ENCODE measurements at regions of chr3 and their contacts with region 1.

Region 1: DNA sequence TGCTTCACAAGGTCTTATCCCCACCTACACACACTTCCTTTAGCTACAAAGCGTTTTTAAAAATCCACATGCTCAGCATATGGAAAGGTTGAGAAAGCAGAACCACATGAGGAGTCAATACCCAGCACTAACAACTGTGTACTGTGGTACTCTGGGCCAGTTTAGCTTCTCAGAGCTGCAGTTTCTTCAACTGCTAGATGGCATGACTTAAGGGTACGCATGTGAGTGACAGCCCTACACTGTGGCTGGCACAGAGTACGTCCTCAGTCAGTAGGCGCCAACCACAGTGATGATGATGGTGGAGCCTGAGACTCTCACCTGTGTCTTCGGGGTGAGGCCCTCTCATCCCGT is 17.4 kb downstream of the CCDC12 start:
- DNase-seq: peak in 15 of 35 experiments; percentile 19 to 65 (median 35)
- ATAC-seq: peak; percentile 26 to 79 (median 52)
- H3K4me3 ChIP-seq: no peak overlapping the region
- H3K4me3 Mint-ChIP-seq: peak overlapping the region in 2 of 3 donors; percentile 7 to 41
- H3K27ac ChIP-seq: peak overlapping the region; percentile 67
- H3K27ac Mint-ChIP-seq: peak overlapping the region; percentile 74 to 83
- H3K4me1 ChIP-seq: peaks cover 34 to 71% of the 10 kb centered on the region in 2 experiments
- H3K4me1 Mint-ChIP-seq: peaks cover 87 to 90% (median 88%) of the 10 kb centered on the region in 3 donors
- H3K27me3 ChIP-seq: no peaks in the 10 kb centered on the region
- H3K27me3 Mint-ChIP-seq: no peaks in the 10 kb centered on the region

Region 2: GRCh38 chr3:46947981-46948791 is 10.9 kb before region 1 on chr3:
- CTCF ChIA-PET with region 1: interaction called in 1 of 2 experiments, 11 read pairs
- POLR2A ChIA-PET with region 1: interaction called in 1 of 2 experiments, 4 read pairs
- DNase-seq: peak; percentile 29 to 84 (median 63)
- ATAC-seq: peak; percentile 77 to 86 (median 84)
- H3K4me3 ChIP-seq: peak overlapping the region; percentile 3 to 15
- H3K4me3 Mint-ChIP-seq: peak overlapping the region; percentile 57 to 81 (median 76)
- H3K27ac ChIP-seq: peak overlapping the region; percentile 93
- H3K27ac Mint-ChIP-seq: peak overlapping the region; percentile 89 to 96
- H3K4me1 ChIP-seq: peaks cover 33 to 92% of the 10 kb centered on the region in 2 experiments
- H3K4me1 Mint-ChIP-seq: peaks cover 89 to 92% (median 90%) of the 10 kb centered on the region in 3 donors
- H3K27me3 ChIP-seq: no peaks in the 10 kb centered on the region
- H3K27me3 Mint-ChIP-seq: no peaks in the 10 kb centered on the region

Region 3: GRCh38 chr3:47108546-47108945 is 149.4 kb after region 1 on chr3:
- CTCF ChIA-PET with region 1: no interaction called
- POLR2A ChIA-PET with region 1: interaction called in 1 of 2 experiments, 14 read pairs
- DNase-seq: no peak
- ATAC-seq: no peak
- H3K4me3 ChIP-seq: no peak overlapping the region
- H3K4me3 Mint-ChIP-seq: no peak overlapping the region
- H3K27ac ChIP-seq: no peak overlapping the region
- H3K27ac Mint-ChIP-seq: no peak overlapping the region
- H3K4me1 ChIP-seq: no peaks in the 10 kb centered on the region
- H3K4me1 Mint-ChIP-seq: peaks cover 4 to 9% (median 5%) of the 10 kb centered on the region in 3 donors
- H3K27me3 ChIP-seq: no peaks in the 10 kb centered on the region
- H3K27me3 Mint-ChIP-seq: no peaks in the 10 kb centered on the region

Measured in T-cell (primary cell).